PC-9 (cell line): ENCODE measurements at regions of chr6 and their contacts with region 1.

Region 1: GRCh38 chr6:151765444-151765886 is 42.0 kb upstream of the ESR1 start:
- DNase-seq: peak; percentile 45 to 79
- H3K4me3 ChIP-seq: no peak overlapping the region
- H3K27ac ChIP-seq: no peak overlapping the region
- H3K4me1 ChIP-seq: peaks cover 26% of the 10 kb centered on the region
- H3K27me3 ChIP-seq: no peaks in the 10 kb centered on the region
- CTCF ChIP-seq: peak; percentile 85

Region 2: DNA sequence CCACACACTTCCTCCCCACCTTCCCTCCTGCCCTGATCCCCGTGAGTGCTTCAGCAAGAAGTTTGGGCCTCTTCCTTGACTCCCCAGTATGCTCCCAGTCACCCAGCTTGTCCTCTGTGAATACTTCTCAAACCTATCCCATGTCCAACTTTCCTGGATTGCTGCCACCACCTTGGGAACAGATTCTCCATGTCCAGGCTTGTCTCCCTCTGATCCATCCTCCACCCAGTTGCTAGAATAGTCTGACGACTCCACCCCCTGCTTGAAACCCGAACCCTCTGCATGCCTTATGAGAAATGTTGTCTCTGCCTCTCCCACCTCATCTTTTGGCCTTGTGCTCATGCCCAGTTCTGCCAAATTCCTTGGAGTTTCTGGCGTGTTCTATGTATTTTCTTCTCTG is 1514.6 kb before region 1 on chr6:
- CTCF ChIA-PET with region 1: no interaction called
- POLR2A ChIA-PET with region 1: no interaction called
- intact Hi-C with region 1: no loop called
- DNase-seq: peak in 1 of 2 experiments; percentile 22
- H3K4me3 ChIP-seq: no peak overlapping the region
- H3K27ac ChIP-seq: no peak overlapping the region
- H3K4me1 ChIP-seq: peaks cover 36% of the 10 kb centered on the region
- H3K27me3 ChIP-seq: no peaks in the 10 kb centered on the region
- CTCF ChIP-seq: no peak

Region 3: DNA sequence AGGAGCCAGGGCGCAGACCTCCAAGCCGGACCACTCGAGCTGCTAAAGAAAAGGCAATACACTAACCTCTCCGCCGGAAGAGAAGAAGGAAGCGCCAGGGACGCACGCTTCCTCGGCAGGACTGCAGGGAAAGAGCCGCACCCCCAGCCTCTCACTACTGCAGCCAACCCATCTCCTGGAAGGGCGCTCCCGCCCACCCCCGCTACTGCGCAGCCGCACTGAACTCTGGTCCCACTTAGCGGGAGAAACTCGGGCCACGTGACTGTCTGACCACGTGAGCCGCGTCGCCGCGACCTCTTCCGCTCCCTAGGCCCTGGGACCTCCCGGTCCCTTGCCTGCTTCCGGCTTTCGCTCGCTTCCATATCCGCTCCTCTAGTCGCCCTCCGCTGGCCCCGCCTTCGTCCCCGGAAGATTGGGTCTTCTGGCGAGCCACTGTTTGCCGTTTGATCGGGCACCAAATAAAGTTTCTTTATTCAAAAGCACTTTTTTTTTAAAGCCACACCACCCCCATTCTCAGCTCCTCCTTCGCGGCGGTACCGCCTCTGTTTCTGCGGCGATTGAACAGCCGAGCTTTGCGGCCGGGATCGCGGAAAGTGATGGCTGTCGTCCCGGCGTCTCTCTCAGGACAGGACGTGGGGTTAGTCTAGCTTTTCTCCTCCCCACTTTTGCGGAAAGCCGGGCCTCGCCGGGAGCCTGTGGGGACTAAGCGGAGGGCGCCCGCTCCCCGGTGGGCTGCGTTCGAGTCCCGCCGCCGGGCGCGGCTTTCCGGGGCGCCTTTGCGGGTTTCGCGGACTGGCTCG is 313.3 kb before region 1 on chr6 and contains the start of gene RMND1:
- CTCF ChIA-PET with region 1: no interaction called
- POLR2A ChIA-PET with region 1: no interaction called
- intact Hi-C with region 1: loop called (anchors 10 kb)
- DNase-seq: peak; percentile 97
- H3K4me3 ChIP-seq: peak within 1 kb of the TSS; percentile 83
- H3K27ac ChIP-seq: peak within 1 kb of the TSS; percentile 72
- H3K4me1 ChIP-seq: peaks cover 13% of the 10 kb centered on the region; the same call in 1 of the 2 replicates
- H3K27me3 ChIP-seq: no peaks in the 10 kb centered on the region
- CTCF ChIP-seq: no peak
- total RNA-seq, gene RMND1: 17.6 and 19.3 TPM in 2 replicates

Region 4: GRCh38 chr6:151807533-151808370 is 42.3 kb after region 1 on chr6 and contains the start of gene ESR1:
- CTCF ChIA-PET with region 1: no interaction called
- POLR2A ChIA-PET with region 1: no interaction called
- intact Hi-C with region 1: loop called (anchors 5 kb)
- DNase-seq: peak in 1 of 2 experiments; percentile 36
- H3K4me3 ChIP-seq: peak within 1 kb of the TSS; percentile 57
- H3K27ac ChIP-seq: no peak within 1 kb of the TSS
- H3K4me1 ChIP-seq: 0 out of 2 replicates have a peak, but pooled peaks cover 3% of the 10 kb centered on the region
- H3K27me3 ChIP-seq: no peaks in the 10 kb centered on the region
- CTCF ChIP-seq: no peak; the same call in 1 of the 2 replicates
- total RNA-seq, gene ESR1: 1.5 TPM in 2 replicates

Region 5: DNA sequence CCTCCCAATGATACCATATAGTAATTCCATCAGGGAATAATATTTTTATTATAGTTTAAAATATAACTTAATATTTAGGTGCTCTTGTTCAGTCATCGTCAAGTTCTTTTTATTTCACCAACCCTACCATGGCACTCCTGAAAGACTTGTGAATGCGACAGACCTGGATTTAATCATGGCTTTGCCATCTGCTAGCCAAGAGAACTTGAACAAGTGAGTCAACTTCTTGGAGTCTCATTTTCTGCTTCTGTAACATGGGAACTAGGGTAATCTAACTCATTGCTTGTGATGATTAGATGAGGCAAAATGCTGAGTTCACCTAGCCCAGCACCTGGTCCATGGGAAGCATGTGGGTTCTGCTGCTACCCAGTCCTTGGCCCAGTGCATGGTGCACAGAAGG is 104.9 kb after region 1 on chr6:
- CTCF ChIA-PET with region 1: no interaction called
- POLR2A ChIA-PET with region 1: no interaction called
- intact Hi-C with region 1: no loop called
- DNase-seq: no peak
- H3K4me3 ChIP-seq: no peak overlapping the region
- H3K27ac ChIP-seq: no peak overlapping the region
- H3K4me1 ChIP-seq: no peaks in the 10 kb centered on the region
- H3K27me3 ChIP-seq: no peaks in the 10 kb centered on the region
- CTCF ChIP-seq: no peak

Region 6: DNA sequence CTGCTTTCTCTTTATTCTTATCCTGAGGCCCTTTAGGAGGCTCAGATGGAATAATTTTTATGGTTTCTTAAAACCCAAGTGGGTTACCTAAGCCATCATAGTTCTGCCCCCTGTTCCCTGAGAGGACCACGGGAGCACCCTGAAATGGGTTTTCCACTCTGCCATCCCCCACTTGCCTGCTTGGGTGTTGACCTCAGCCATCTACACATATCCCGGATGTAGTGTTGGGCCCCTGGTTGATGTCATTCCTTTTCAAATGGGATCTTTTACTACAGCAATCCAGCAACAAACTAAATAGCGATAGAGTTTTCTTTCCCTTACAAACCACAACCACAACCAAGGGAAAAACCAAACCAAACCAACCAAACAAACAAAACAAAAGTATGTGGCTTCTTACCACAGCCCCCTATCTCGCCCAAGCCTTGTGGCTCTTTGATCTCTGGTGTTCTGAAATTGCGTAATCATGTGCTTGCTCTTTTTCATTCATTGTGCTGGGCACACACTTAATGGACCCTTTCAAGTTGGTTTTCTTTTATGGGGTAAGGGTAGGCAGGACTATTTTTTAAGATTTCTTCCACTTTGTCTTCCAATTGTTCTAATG is 196.9 kb after region 1 on chr6:
- CTCF ChIA-PET with region 1: no interaction called
- POLR2A ChIA-PET with region 1: no interaction called
- intact Hi-C with region 1: no loop called
- DNase-seq: no peak
- H3K4me3 ChIP-seq: no peak overlapping the region
- H3K27ac ChIP-seq: no peak overlapping the region
- H3K4me1 ChIP-seq: no peaks in the 10 kb centered on the region
- H3K27me3 ChIP-seq: no peaks in the 10 kb centered on the region
- CTCF ChIP-seq: no peak

Region 7: DNA sequence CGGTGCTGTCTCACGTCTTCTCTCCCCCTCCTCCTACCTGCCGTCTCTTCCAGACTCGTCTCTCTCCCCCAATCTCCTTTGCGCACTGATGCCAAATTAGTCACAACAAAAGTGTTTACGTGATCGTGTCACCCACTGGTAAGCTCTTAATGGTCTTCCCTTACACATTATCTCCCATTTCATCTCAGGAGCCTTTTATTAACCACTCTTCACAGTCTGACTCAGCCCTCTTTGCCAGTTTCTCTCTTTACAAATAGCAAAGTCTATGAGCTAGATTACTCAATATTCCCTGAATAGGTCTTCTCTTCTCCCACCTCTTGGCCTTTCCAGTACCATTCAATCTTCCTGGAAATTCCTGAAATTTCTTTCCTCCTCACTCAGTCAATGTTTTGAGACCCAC is 289.0 kb after region 1 on chr6:
- CTCF ChIA-PET with region 1: no interaction called
- POLR2A ChIA-PET with region 1: no interaction called
- intact Hi-C with region 1: loop called (anchors 1 kb)
- DNase-seq: peak; percentile 15 to 88
- H3K4me3 ChIP-seq: peak overlapping the region; percentile 43; the same call in 1 of the 2 replicates
- H3K27ac ChIP-seq: peak overlapping the region; percentile 75
- H3K4me1 ChIP-seq: peaks cover 25% of the 10 kb centered on the region
- H3K27me3 ChIP-seq: no peaks in the 10 kb centered on the region
- CTCF ChIP-seq: no peak

Region 8: GRCh38 chr6:152244998-152245630 is 479.6 kb after region 1 on chr6:
- CTCF ChIA-PET with region 1: no interaction called
- POLR2A ChIA-PET with region 1: no interaction called
- intact Hi-C with region 1: loop called (anchors 5 kb)
- DNase-seq: no peak
- H3K4me3 ChIP-seq: no peak overlapping the region
- H3K27ac ChIP-seq: no peak overlapping the region
- H3K4me1 ChIP-seq: no peaks in the 10 kb centered on the region
- H3K27me3 ChIP-seq: no peaks in the 10 kb centered on the region
- CTCF ChIP-seq: no peak

Region 9: DNA sequence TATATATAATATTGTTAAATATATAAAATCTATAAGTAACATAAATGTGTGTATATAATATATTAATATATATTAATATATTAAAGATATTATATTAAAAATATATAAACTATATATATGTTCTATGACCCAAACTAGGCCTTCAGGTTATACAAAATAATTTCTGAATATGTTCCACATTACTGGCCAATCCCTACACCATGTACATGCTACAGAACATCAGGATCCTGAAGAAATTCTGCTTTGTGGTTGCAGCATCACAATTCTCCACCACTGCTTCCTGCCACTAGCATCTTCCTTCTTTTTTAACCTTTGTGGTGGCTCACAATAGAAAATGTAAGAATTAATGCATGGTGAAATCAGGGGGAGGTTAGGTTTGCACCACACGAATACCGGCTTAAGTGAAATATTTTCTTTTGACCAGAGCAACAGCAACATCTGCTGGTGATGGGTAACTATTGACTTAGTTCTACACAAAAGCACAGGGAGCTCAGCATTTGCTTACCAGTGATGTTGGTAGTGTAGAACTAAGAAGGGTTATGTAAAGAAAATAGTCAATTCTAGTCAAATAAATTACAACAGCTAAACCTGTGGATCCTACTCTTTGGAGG is 591.1 kb after region 1 on chr6:
- CTCF ChIA-PET with region 1: no interaction called
- POLR2A ChIA-PET with region 1: no interaction called
- intact Hi-C with region 1: loop called (anchors 10 kb)
- DNase-seq: no peak
- H3K4me3 ChIP-seq: no peak overlapping the region
- H3K27ac ChIP-seq: no peak overlapping the region
- H3K4me1 ChIP-seq: peaks cover 10% of the 10 kb centered on the region
- H3K27me3 ChIP-seq: no peaks in the 10 kb centered on the region
- CTCF ChIP-seq: peak; percentile 58